ENCODE measurements at regions of chr3 and their contacts with region 1.

Region 1: DNA sequence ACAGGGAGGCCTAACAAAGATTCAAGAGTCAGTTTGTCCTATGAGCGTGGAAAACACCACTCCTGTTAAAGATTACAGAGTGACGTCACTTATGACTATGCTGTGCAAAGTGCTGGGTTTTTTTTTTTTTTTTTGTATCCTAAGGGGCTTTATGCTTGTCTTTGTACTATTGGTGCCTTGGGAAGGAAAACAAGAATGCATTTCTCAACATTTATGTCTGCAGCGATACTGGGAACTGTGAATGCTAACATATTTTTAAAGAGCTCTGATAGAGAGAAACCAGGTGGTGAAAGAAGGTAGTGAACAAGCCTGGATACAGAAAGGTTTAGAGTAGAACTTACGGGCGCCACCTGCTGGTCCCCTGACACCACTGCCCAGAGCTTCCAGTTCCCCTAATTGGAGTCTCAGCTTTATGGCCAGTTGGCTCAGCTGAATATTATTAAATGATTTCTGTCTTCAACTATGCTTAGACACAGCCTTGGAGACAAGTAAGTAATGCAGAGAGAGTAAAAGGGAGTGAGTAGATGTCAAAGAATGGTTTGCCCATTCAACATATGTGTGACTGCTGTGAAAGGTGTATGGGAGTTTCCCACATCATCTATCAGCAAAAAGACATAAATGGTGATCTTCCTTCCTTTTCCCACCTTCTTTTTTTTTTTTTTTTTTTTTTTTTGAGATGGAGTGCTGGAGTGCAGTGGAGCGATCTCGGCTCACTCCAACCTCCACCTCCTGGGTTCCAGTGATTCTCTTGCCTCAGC is 807.9 kb upstream of the CFAP20DC start:
- DNase-seq: peak; percentile 69 to 86 (median 80)
- ATAC-seq: peak; percentile 89 to 97 (median 94)
- H3K4me3 ChIP-seq: peak overlapping the region in 1 of 12 donors; percentile 27
- H3K27ac ChIP-seq: no peak overlapping the region
- H3K4me1 ChIP-seq: peaks cover 0 to 7% (median 0%) of the 10 kb centered on the region in 12 donors
- H3K27me3 ChIP-seq: no peaks in the 10 kb centered on the region
- CTCF ChIP-seq: peak; percentile 85 to 97 (median 90)
- POLR2A ChIP-seq: no peak

Region 2: GRCh38 chr3:58640700-58641372 is 1216.9 kb before region 1 on chr3:
- intact Hi-C with region 1: loop called in 4 of 10 experiments (anchors 5 to 10 kb)
- DNase-seq: peak; percentile 63 to 84 (median 75)
- ATAC-seq: peak; percentile 76 to 92 (median 88)
- H3K4me3 ChIP-seq: no peak overlapping the region
- H3K27ac ChIP-seq: no peak overlapping the region
- H3K4me1 ChIP-seq: peaks cover 0 to 6% (median 0%) of the 10 kb centered on the region in 12 donors
- H3K27me3 ChIP-seq: peaks cover 0 to 5% (median 0%) of the 10 kb centered on the region in 9 donors
- CTCF ChIP-seq: peak; percentile 66 to 94 (median 85)
- POLR2A ChIP-seq: no peak

Region 3: GRCh38 chr3:58994746-58995330 is 862.9 kb before region 1 on chr3:
- intact Hi-C with region 1: loop called in 1 of 10 experiments (anchors 5 kb)
- DNase-seq: no peak
- ATAC-seq: no peak
- H3K4me3 ChIP-seq: no peak overlapping the region
- H3K27ac ChIP-seq: no peak overlapping the region
- H3K4me1 ChIP-seq: no peaks in the 10 kb centered on the region
- H3K27me3 ChIP-seq: no peaks in the 10 kb centered on the region
- CTCF ChIP-seq: peak; percentile 36 to 71 (median 57)
- POLR2A ChIP-seq: no peak

Region 4: GRCh38 chr3:59212128-59212779 is 645.5 kb before region 1 on chr3:
- intact Hi-C with region 1: loop called (anchors 5 to 10 kb)
- DNase-seq: no peak
- ATAC-seq: peak in 3 of 4 donors; percentile 65 to 79 (median 77)
- H3K4me3 ChIP-seq: no peak overlapping the region
- H3K27ac ChIP-seq: no peak overlapping the region
- H3K4me1 ChIP-seq: peaks cover 0 to 3% (median 0%) of the 10 kb centered on the region in 12 donors
- H3K27me3 ChIP-seq: peaks cover 0 to 5% (median 0%) of the 10 kb centered on the region in 9 donors
- CTCF ChIP-seq: peak; percentile 46 to 68 (median 63)
- POLR2A ChIP-seq: no peak

Region 5: DNA sequence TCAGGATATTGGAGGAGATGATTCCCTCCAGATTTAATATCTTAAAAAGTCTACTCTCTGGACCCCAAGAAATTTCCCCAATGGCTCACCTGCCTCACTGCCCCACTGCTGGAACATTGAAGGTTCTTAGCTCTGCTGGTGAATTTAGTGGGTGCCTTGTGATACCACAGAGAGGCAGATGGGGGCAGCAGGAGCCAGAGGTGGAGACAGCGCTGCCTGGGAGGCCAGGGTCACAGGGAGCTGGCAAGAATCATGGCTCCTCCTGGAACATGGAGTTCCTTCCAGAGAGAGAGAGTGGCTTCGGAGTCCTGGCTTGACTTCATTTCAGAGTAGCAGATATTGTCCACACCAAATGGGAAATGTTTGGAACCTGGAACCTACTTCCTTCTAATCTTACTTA is 544.4 kb before region 1 on chr3:
- intact Hi-C with region 1: loop called in 4 of 10 experiments (anchors 2 to 10 kb)
- DNase-seq: peak; percentile 20 to 70 (median 55)
- ATAC-seq: peak; percentile 88 to 96 (median 96)
- H3K4me3 ChIP-seq: no peak overlapping the region
- H3K27ac ChIP-seq: no peak overlapping the region
- H3K4me1 ChIP-seq: peaks cover 0 to 8% (median 0%) of the 10 kb centered on the region in 12 donors
- H3K27me3 ChIP-seq: no peaks in the 10 kb centered on the region
- CTCF ChIP-seq: peak; percentile 34 to 60 (median 51)
- POLR2A ChIP-seq: no peak

Region 6: GRCh38 chr3:59424268-59425010 is 433.3 kb before region 1 on chr3:
- intact Hi-C with region 1: loop called in 1 of 10 experiments (anchors 5 kb)
- DNase-seq: peak in 1 of 5 donors; percentile 29
- ATAC-seq: peak; percentile 48 to 81 (median 68)
- H3K4me3 ChIP-seq: no peak overlapping the region
- H3K27ac ChIP-seq: no peak overlapping the region
- H3K4me1 ChIP-seq: peaks cover 0 to 31% (median 0%) of the 10 kb centered on the region in 12 donors
- H3K27me3 ChIP-seq: no peaks in the 10 kb centered on the region
- CTCF ChIP-seq: no peak
- POLR2A ChIP-seq: no peak

Region 7: DNA sequence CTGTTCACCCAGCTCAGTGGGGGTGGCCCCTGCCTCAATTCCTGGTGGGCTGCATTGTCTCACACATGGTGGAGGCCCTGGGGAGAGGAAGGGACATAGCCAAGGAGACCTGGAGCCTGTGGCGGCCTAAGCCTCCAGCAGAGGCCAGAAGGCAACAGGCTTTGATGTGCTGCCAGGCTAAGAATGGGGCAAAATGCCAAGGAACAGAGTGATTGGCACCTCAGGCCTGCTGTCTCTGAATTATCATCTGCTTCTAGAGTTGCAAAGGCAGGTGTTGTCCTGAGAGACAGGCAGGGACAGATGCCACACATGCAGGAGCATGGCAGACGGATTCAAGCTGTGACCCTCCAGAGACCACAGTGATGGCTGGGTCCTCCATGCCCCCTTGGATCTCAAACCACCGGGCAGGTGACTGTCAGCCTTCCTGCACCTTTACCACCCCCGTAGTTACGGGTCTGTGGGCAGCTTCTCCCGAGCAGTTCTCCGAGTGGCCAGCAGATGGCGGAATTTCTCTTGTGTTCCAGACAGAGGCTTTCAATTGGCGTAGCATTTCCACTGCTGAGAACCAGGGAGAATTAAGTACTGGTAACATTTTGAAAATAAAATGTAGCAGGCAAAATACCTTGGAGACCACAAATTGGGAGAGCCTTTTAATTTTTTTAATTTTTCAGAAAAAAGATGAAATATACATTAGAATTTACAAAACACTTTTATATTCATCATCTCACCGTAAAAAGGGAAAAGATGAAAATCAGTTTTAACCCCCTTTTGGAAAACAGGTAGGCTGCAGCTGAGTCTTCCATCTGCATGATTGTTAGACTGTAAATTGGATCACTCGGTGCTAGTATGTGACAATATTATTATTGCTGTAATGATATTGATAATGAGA is 282.4 kb before region 1 on chr3:
- intact Hi-C with region 1: loop called (anchors 1 to 5 kb)
- DNase-seq: peak; percentile 75 to 89 (median 82)
- ATAC-seq: peak; percentile 72 to 84 (median 81)
- H3K4me3 ChIP-seq: no peak overlapping the region
- H3K27ac ChIP-seq: no peak overlapping the region
- H3K4me1 ChIP-seq: peaks cover 0 to 13% (median 0%) of the 10 kb centered on the region in 12 donors
- H3K27me3 ChIP-seq: no peaks in the 10 kb centered on the region
- CTCF ChIP-seq: peak; percentile 93 to 98 (median 94)
- POLR2A ChIP-seq: no peak

Measured in heart left ventricle (tissue), 16 donors.